HEK293 (cell line): ENCODE measurements at regions of chr17 and their contacts with region 1.

Region 1: GRCh38 chr17:73956669-73957465 is 246.6 kb upstream of the RPL38 start:
- H3K4me3 ChIP-seq: no peak overlapping the region
- H3K27ac ChIP-seq: no peak overlapping the region
- H3K4me1 ChIP-seq: no peaks in the 10 kb centered on the region
- CTCF ChIP-seq: no peak

Region 2: DNA sequence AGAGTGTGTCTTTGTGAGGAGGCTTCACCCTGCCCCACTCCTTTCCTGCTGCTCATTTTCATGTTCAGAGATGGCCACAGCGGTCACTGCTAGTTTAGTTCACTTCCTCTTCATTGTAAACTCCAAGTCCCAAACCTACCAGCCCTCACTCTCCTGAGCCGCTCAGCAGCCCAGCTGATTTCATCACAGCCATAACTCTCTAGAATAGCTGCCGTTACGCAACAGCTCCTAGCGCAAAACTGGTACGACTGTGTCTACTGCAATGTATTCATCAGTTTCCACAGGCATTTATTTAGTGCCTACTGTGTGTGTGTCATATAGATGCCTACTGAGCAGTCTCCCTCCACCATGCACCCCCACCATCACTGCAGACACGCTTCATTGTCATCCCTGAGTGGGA is 13.1 kb after region 1 on chr17:
- CTCF ChIA-PET with region 1: interaction called, 10 read pairs
- POLR2A ChIA-PET with region 1: no interaction called
- H3K4me3 ChIP-seq: no peak overlapping the region
- H3K27ac ChIP-seq: no peak overlapping the region
- H3K4me1 ChIP-seq: no peaks in the 10 kb centered on the region
- CTCF ChIP-seq: no peak